Activated CD8-positive, alpha-beta T cell treated with anti-CD3 and anti-CD28 coated beads, Interleukin-2, amount 10 ng/mL, durations not matched to agents 7 days and 5 days (primary cell): ENCODE measurements at regions of chr10 and their contacts with region 1.

Region 1: DNA sequence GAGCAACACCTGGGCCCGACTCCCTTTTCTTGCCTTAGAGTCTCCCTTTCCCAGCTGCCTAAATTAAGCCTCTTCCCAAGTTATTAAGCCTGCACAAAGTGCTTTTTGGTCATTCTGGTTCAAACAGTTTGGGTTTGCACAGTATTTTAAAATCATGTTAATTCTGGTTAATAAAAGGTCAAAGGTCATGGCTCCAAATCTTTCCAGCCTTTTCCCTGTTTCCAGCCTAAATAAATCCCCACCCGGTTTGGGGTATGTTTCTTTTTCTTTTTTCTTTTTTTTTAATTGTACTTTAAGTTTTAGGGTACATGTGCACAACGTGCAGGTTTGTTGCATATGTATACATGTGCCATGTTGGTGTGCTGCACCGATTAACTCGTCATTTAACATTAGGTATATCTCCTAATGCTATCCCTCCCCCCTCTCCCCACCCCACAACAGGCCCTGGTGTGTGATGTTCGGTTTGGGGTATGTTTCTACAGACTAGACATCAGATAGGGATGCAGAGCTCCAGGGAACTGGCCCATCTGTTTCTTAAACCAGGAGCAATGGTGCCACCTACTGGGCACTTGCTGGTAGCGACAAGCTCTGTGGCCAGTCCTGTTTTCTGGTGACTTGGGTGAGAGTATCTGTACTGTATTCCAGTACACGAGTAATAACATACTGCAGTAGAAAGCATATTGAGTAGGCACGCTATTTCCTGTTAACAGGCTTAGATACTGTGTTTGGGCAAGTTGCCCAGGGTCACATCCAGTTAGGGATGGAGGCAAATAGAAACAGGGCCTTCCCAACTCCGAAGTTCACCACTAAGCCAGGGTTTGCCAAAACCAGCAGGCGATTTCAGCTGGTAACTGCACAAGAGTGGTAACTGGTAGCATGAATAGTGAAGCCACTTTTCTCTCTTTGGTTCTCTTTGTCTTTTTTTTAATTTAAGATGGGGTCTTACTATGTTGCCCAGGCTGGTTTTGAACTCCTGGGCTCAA is 60.6 kb upstream of the TRIM8 start:
- DNase-seq: peak; percentile 90
- ATAC-seq: peak; percentile 99
- H3K4me3 Mint-ChIP-seq: no peak overlapping the region
- H3K27ac Mint-ChIP-seq: peak overlapping the region; percentile 20
- H3K4me1 Mint-ChIP-seq: no peaks in the 10 kb centered on the region
- H3K27me3 Mint-ChIP-seq: no peaks in the 10 kb centered on the region

Region 2: GRCh38 chr10:102167861-102168260 is 415.9 kb before region 1 on chr10:
- CTCF ChIA-PET with region 1: interaction called, 11 read pairs
- POLR2A ChIA-PET with region 1: no interaction called
- DNase-seq: no peak
- ATAC-seq: no peak
- H3K4me3 Mint-ChIP-seq: no peak overlapping the region
- H3K27ac Mint-ChIP-seq: no peak overlapping the region
- H3K4me1 Mint-ChIP-seq: peaks cover 12% of the 10 kb centered on the region
- H3K27me3 Mint-ChIP-seq: no peaks in the 10 kb centered on the region

Region 3: GRCh38 chr10:102484021-102484420 is 99.7 kb before region 1 on chr10:
- CTCF ChIA-PET with region 1: interaction called, 20 read pairs
- POLR2A ChIA-PET with region 1: no interaction called
- DNase-seq: no peak
- ATAC-seq: no peak
- H3K4me3 Mint-ChIP-seq: no peak overlapping the region
- H3K27ac Mint-ChIP-seq: no peak overlapping the region
- H3K4me1 Mint-ChIP-seq: peaks cover 2% of the 10 kb centered on the region
- H3K27me3 Mint-ChIP-seq: no peaks in the 10 kb centered on the region

Region 4: GRCh38 chr10:102497545-102497944 is 86.2 kb before region 1 on chr10:
- CTCF ChIA-PET with region 1: interaction called, 142 read pairs
- POLR2A ChIA-PET with region 1: no interaction called
- DNase-seq: no peak
- ATAC-seq: no peak
- H3K4me3 Mint-ChIP-seq: no peak overlapping the region
- H3K27ac Mint-ChIP-seq: no peak overlapping the region
- H3K4me1 Mint-ChIP-seq: peaks cover 22% of the 10 kb centered on the region
- H3K27me3 Mint-ChIP-seq: no peaks in the 10 kb centered on the region

Region 5: GRCh38 chr10:102503281-102504220 is 80.2 kb before region 1 on chr10 and contains the start of gene SUFU:
- CTCF ChIA-PET with region 1: interaction called, 142 read pairs
- POLR2A ChIA-PET with region 1: interaction called, 9 read pairs
- DNase-seq: peak; percentile 99
- ATAC-seq: peak; percentile 74
- H3K4me3 Mint-ChIP-seq: no peak within 1 kb of the TSS
- H3K27ac Mint-ChIP-seq: peak within 1 kb of the TSS; percentile 83
- H3K4me1 Mint-ChIP-seq: peaks cover 29% of the 10 kb centered on the region
- H3K27me3 Mint-ChIP-seq: no peaks in the 10 kb centered on the region
- total RNA-seq, gene SUFU: 10.6 to 12.0 TPM

Region 6: GRCh38 chr10:102511583-102512274 is 72.0 kb before region 1 on chr10:
- CTCF ChIA-PET with region 1: interaction called, 142 read pairs
- POLR2A ChIA-PET with region 1: no interaction called
- DNase-seq: peak; percentile 25
- ATAC-seq: peak; percentile 71
- H3K4me3 Mint-ChIP-seq: no peak overlapping the region
- H3K27ac Mint-ChIP-seq: peak overlapping the region; percentile 79
- H3K4me1 Mint-ChIP-seq: peaks cover 28% of the 10 kb centered on the region
- H3K27me3 Mint-ChIP-seq: no peaks in the 10 kb centered on the region

Region 7: DNA sequence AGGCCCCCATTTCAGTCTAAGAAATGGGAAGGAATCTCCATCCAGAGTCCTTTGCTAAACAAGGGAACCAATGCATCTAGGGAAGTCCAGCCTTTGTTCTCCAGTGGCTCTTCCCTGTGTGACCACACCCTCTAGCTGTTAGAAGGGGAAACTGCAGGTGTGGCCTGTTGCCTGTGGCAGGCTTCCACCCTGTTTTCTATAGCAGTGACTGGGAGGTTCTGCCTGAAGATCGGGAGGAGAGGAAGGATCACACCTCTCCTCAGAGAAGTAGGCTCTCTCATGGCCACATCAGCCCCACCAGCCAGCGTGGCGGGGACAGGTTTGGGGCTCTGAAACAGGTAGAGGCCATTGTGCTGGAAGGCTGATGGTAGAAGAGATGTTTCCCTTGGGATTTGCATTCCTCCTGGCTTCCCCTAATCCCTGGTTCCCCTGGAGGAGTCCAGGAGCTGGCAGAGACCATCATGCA is 12.8 kb after region 1 on chr10:
- CTCF ChIA-PET with region 1: interaction called, 25 read pairs
- POLR2A ChIA-PET with region 1: no interaction called
- DNase-seq: peak; percentile 55
- ATAC-seq: peak; percentile 86
- H3K4me3 Mint-ChIP-seq: no peak overlapping the region
- H3K27ac Mint-ChIP-seq: no peak overlapping the region
- H3K4me1 Mint-ChIP-seq: peaks cover 4% of the 10 kb centered on the region
- H3K27me3 Mint-ChIP-seq: no peaks in the 10 kb centered on the region